ENCODE measurements at regions of chr9 and their contacts with region 1.

Region 1: GRCh38 chr9:100150214-100150613 is 51.2 kb downstream of the INVS start:
- DNase-seq: peak; percentile 26
- H3K4me3 ChIP-seq: no peak overlapping the region
- H3K27ac ChIP-seq: no peak overlapping the region
- H3K4me1 ChIP-seq: peaks cover 5% of the 10 kb centered on the region
- H3K27me3 ChIP-seq: no peaks in the 10 kb centered on the region
- CTCF ChIP-seq: no peak
- POLR2A ChIP-seq: no peak

Region 2: GRCh38 chr9:100020121-100020795 is 130.0 kb before region 1 on chr9:
- CTCF ChIA-PET with region 1: no interaction called
- POLR2A ChIA-PET with region 1: no interaction called
- dilution Hi-C with region 1: no loop called
- intact Hi-C with region 1: no loop called
- DNase-seq: no peak
- H3K4me3 ChIP-seq: no peak overlapping the region
- H3K27ac ChIP-seq: no peak overlapping the region
- H3K4me1 ChIP-seq: no peaks in the 10 kb centered on the region
- H3K27me3 ChIP-seq: no peaks in the 10 kb centered on the region
- CTCF ChIP-seq: no peak
- POLR2A ChIP-seq: no peak

Region 3: DNA sequence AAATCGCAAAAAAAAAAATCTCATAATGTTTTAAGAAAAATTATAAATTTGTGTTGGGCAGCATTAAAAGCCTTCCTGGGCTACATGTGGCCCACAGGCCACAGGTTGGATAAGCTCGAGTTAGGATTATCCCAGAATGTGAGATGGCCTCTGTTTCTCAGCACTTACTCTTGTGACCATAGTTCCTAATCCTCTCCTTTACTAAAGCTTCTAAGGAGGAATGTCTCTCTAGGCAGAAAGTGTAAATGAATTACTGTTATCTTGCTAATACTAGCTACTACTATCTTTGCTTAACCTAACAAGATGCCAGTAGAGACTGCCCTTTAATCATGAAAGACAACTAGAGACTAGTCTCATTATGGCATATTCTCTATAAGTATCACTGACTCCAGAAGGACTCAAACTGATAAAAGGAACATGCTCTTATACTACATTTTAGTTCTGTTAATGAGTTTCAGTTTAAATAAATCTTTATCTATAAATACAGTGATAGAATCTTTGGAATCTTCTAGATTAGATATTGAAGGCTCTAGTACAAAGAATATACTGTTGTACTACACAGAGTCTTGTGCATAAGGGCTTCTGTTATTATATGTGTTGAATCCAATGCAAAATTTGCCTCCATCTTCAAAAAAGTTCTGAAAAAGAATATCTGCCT is 37.4 kb before region 1 on chr9:
- CTCF ChIA-PET with region 1: no interaction called
- POLR2A ChIA-PET with region 1: no interaction called
- dilution Hi-C with region 1: no loop called
- intact Hi-C with region 1: no loop called
- DNase-seq: no peak
- H3K4me3 ChIP-seq: no peak overlapping the region
- H3K27ac ChIP-seq: no peak overlapping the region
- H3K4me1 ChIP-seq: no peaks in the 10 kb centered on the region
- H3K27me3 ChIP-seq: no peaks in the 10 kb centered on the region
- CTCF ChIP-seq: no peak
- POLR2A ChIP-seq: no peak

Region 4: DNA sequence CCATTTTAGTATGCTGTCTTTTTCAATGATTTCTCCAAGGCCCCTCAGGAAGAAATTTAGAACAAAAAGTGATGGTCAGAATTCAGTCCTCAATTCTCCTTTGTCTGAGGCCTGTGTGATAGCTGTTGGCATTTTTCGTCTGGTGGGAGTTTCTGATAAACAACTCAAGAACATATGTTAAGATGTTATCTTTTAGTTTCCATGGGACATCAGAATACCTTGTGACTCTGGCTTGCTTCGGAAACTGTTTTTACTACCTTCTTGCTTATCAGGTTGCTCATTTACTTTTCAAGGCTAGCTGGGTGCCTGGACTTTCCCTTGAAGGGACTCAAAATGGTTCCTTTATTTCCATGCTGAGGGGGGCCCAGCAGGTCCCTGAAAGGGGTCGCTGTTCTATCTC is 46.0 kb after region 1 on chr9:
- CTCF ChIA-PET with region 1: no interaction called
- POLR2A ChIA-PET with region 1: no interaction called
- dilution Hi-C with region 1: no loop called
- intact Hi-C with region 1: loop called (anchors 5 kb)
- DNase-seq: no peak
- H3K4me3 ChIP-seq: no peak overlapping the region
- H3K27ac ChIP-seq: no peak overlapping the region
- H3K4me1 ChIP-seq: no peaks in the 10 kb centered on the region
- H3K27me3 ChIP-seq: no peaks in the 10 kb centered on the region
- CTCF ChIP-seq: no peak
- POLR2A ChIP-seq: no peak

Region 5: DNA sequence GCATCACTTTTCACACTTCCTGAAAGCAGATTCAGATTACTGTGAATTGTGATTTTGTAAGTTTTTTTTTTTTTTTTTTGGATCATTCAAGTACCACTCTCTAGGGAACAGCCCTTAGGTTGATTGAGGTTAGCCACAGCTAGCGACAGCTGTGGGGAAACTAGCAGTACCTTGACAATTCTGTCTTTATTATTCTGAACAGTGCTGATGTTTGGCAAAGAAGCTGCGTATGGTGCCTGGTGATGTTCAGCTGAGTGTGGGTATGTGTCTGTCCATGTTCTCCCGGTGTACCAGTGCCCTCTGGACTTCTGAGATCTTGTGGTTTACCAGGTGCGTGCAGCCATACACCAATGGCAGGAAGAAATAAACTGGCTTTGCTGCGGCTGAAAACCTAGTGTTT is 761.1 kb after region 1 on chr9:
- CTCF ChIA-PET with region 1: no interaction called
- POLR2A ChIA-PET with region 1: no interaction called
- dilution Hi-C with region 1: no loop called
- intact Hi-C with region 1: no loop called
- DNase-seq: no peak
- H3K4me3 ChIP-seq: no peak overlapping the region
- H3K27ac ChIP-seq: no peak overlapping the region
- H3K4me1 ChIP-seq: no peaks in the 10 kb centered on the region
- H3K27me3 ChIP-seq: no peaks in the 10 kb centered on the region
- CTCF ChIP-seq: no peak
- POLR2A ChIP-seq: no peak

Measured in endothelial cell of umbilical vein (primary cell).